ENCODE measurements at regions of chr14 and their contacts with region 1.

Region 1: DNA sequence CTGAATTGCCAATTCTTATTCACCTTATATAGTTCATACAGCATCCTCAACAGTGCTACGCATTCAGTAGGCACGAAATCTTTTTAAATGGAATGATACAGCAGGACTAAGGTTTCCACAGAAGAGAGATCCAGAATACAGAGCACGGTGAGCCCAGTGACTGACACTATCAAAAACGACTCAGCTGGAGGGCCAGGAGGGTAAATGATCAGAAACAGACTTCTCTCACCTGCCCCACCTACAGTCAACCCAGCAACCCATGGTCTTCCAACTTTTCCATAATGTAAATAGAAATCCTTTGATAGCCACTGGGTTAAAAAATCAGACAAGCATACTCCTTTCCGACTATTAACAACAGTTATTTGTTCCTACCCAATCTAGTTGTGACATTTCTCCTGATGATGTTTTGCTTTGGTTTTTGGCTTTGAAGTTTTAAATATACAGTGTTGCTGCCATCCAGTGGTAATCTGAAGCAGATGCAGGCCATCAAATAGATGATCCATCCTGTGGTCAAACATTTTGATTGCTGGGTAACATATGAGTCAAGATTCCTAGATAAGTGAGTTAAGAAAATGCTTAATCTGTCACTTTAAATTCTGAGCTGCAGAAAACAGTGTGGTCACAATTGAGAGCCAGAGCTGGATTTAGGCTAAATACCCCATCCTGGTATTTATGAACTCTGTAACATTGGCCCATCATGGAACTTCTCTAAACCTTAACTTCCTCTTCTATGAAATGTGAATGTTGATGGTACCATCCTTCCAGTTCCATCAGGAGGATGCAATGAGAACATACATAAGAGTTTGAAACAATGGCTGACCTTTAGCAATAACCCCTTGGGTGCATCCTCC is 42.0 kb downstream of the GPHB5 start:
- DNase-seq: peak; percentile 27
- ATAC-seq: no peak
- H3K4me3 ChIP-seq: no peak overlapping the region
- H3K4me3 Mint-ChIP-seq: no peak overlapping the region
- H3K27ac ChIP-seq: no peak overlapping the region
- H3K27ac Mint-ChIP-seq: no peak overlapping the region
- H3K4me1 ChIP-seq: no peaks in the 10 kb centered on the region
- H3K4me1 Mint-ChIP-seq: no peaks in the 10 kb centered on the region
- H3K27me3 ChIP-seq: peaks cover 0 to 2% (median 0%) of the 10 kb centered on the region in 4 experiments
- H3K27me3 Mint-ChIP-seq: peaks cover 15% of the 10 kb centered on the region
- CTCF ChIP-seq: peak; percentile 58

Region 2: GRCh38 chr14:62179367-62180018 is 1097.2 kb before region 1 on chr14:
- CTCF ChIA-PET with region 1: interaction called, 5 read pairs
- POLR2A ChIA-PET with region 1: no interaction called
- intact Hi-C with region 1: loop called (anchors 2 kb)
- DNase-seq: peak; percentile 9
- ATAC-seq: no peak
- H3K4me3 ChIP-seq: no peak overlapping the region
- H3K4me3 Mint-ChIP-seq: no peak overlapping the region
- H3K27ac ChIP-seq: no peak overlapping the region
- H3K27ac Mint-ChIP-seq: no peak overlapping the region
- H3K4me1 ChIP-seq: no peaks in the 10 kb centered on the region
- H3K4me1 Mint-ChIP-seq: no peaks in the 10 kb centered on the region
- H3K27me3 ChIP-seq: peaks cover 0 to 20% (median 1%) of the 10 kb centered on the region in 4 experiments
- H3K27me3 Mint-ChIP-seq: peaks cover 45% of the 10 kb centered on the region
- CTCF ChIP-seq: peak; percentile 45

Region 3: DNA sequence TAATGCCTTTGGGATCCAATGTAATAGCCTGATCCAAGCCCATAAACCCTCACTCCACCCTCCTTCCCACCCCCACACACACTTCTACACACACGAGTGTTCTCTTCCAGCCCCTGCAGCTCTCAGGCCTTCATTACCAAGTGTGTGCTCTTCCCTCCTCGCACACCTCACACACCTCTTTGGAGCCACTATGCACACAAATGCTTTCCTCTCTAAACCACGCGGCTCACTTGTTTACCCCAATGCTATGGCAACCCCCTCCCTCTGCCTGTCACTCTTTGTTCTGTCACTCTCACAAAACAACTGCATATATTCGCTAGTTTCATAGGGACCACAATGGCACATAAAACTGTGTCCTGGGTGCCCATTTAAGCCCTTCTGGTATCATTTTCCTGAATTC is 231.3 kb after region 1 on chr14:
- CTCF ChIA-PET with region 1: no interaction called
- POLR2A ChIA-PET with region 1: no interaction called
- intact Hi-C with region 1: no loop called
- DNase-seq: no peak
- ATAC-seq: no peak
- H3K4me3 ChIP-seq: no peak overlapping the region
- H3K4me3 Mint-ChIP-seq: no peak overlapping the region
- H3K27ac ChIP-seq: no peak overlapping the region
- H3K27ac Mint-ChIP-seq: no peak overlapping the region
- H3K4me1 ChIP-seq: peaks cover 9 to 15% of the 10 kb centered on the region in 2 donors
- H3K4me1 Mint-ChIP-seq: peaks cover 48% of the 10 kb centered on the region
- H3K27me3 ChIP-seq: no peaks in the 10 kb centered on the region
- H3K27me3 Mint-ChIP-seq: no peaks in the 10 kb centered on the region
- CTCF ChIP-seq: no peak

Measured in B cell (primary cell).